Aorta (tissue), 5 donors: ENCODE measurements at regions of chr5 and their contacts with region 1.

Region 1: DNA sequence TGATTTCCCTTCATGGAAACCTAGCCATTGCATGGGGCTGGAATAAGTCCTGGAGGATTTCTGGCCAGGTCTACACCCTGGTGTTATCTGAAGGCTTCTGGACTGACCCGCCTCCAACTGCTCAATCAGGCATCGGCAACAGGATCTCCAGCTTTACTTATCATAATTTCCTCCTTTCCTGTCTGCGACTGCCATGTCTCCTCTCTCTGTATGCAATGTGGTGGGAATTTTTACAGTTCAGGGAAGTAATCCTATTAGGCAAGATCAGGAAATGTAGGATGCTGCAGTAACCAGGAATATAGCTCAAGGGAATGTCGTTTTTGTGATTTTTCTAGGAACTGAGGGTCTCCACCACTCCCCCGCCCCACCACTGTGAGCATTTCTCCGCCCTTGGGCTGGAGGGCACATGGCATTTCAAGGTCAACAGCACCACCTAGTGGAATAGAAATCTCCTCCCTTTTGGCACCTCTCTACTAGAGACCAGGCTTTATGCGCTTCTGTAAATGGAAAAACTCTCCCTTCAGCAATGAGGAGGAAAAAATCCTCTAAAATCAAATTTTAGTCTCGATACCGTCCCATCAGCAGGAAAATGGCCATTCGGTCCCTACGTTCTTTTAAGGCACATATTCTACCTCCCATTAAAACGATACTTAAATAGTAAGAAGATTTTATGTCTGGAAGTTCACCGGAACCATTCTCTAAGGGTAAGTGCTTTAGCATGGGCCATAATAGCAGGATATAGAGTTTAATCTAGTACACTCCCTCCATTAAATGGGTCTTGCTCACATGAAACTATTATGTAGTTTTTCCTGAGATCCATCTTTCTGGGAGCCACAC is 93.0 kb downstream of the YTHDC2 start:
- DNase-seq: peak in 1 of 2 donors; percentile 49
- ATAC-seq: peak; percentile 87
- H3K4me3 ChIP-seq: no peak overlapping the region
- H3K27ac ChIP-seq: no peak overlapping the region
- H3K4me1 ChIP-seq: no peaks in the 10 kb centered on the region
- H3K27me3 ChIP-seq: no peaks in the 10 kb centered on the region

Region 2: GRCh38 chr5:112995764-112996618 is 610.5 kb before region 1 on chr5:
- intact Hi-C with region 1: loop called (anchors 5 to 10 kb)
- DNase-seq: peak; percentile 76 to 82
- ATAC-seq: peak; percentile 87
- H3K4me3 ChIP-seq: no peak overlapping the region
- H3K27ac ChIP-seq: no peak overlapping the region
- H3K4me1 ChIP-seq: no peaks in the 10 kb centered on the region
- H3K27me3 ChIP-seq: no peaks in the 10 kb centered on the region

Region 3: DNA sequence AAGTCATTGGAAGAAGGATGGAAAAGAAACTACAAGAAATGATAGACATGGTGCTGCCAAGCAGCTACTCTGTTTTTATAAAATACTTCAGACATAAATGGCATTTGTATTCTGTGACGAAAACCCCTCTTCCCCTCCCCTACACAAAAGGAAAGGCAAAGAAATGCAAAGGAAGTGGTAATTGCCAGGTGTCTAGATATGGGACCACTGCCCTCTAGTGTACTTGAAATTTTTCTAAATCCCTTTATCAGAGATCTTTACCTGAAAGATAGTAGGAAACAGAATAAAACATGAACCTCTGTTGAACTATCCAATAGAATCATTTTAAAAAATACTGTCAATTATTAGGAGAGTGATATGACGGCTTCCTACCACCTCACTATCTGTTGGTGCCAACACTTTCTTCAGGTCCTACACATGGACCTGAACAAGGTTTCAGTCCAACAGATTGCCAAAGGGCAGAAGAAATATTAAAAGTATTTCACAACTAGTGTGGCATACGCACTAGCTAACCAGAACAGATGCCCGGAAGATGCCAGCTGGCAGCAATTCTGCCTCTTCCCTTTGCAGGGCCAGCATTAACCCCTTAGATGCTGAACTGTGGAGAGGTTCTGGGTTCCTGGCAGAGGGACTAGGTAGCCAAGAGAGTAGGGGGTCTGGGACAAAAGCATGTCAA is 275.8 kb before region 1 on chr5:
- intact Hi-C with region 1: loop called in 1 of 2 experiments (anchors 10 kb)
- DNase-seq: peak in 1 of 2 donors; percentile 68
- ATAC-seq: peak; percentile 57
- H3K4me3 ChIP-seq: no peak overlapping the region
- H3K27ac ChIP-seq: no peak overlapping the region
- H3K4me1 ChIP-seq: no peaks in the 10 kb centered on the region
- H3K27me3 ChIP-seq: no peaks in the 10 kb centered on the region

Region 4: DNA sequence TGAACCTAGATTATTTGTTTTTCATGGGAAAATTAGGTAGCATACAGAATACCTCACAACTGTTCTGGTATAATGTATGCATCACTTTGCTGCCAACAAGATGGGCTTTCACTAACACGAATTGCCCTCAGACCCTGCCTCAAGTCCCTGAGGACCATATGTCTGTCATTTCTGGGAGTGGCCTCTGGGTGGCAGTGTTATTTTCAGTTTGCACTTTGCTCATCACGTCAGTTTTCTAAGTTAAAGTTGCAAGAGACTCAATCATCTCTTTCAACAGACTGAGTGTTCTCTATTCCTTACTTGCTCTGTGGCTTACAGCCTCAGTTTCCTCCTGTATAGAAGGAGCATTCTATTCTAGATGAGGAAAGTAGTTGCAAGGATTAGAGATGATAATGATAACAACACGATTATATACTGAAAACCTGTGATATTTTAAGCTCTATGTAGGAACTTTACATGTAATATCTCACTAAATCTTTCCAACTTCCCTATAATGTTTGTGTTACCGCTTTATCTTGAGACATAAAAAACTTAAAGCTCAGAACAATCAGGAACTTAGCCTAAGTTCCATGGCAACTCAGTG is 227.5 kb before region 1 on chr5:
- intact Hi-C with region 1: loop called (anchors 2 to 10 kb)
- DNase-seq: peak in 1 of 2 donors; percentile 58
- ATAC-seq: no peak
- H3K4me3 ChIP-seq: no peak overlapping the region
- H3K27ac ChIP-seq: no peak overlapping the region
- H3K4me1 ChIP-seq: peaks cover 0 to 1% of the 10 kb centered on the region in 2 donors
- H3K27me3 ChIP-seq: no peaks in the 10 kb centered on the region

Region 5: DNA sequence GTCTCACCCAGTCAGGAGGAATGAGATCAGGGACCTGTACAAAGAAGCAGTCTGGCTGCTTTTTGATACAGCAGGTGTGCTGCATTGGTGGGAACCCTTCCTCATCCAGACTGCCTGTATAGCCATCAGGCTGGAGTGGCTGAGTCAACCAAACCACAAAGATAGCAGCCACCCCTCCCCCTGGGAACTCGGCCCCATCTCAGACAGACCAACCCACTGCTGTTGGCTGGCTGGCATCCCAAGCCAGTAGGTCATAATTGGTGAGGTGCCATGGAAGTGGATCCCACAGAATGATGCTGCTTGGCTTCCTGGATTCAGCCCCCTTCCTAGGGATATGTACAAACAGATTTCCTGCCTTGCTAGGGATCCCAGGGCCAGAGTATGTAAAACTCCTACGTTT is 32.1 kb before region 1 on chr5:
- intact Hi-C with region 1: no loop called
- DNase-seq: no peak
- ATAC-seq: no peak
- H3K4me3 ChIP-seq: no peak overlapping the region
- H3K27ac ChIP-seq: no peak overlapping the region
- H3K4me1 ChIP-seq: no peaks in the 10 kb centered on the region
- H3K27me3 ChIP-seq: no peaks in the 10 kb centered on the region

Region 6: DNA sequence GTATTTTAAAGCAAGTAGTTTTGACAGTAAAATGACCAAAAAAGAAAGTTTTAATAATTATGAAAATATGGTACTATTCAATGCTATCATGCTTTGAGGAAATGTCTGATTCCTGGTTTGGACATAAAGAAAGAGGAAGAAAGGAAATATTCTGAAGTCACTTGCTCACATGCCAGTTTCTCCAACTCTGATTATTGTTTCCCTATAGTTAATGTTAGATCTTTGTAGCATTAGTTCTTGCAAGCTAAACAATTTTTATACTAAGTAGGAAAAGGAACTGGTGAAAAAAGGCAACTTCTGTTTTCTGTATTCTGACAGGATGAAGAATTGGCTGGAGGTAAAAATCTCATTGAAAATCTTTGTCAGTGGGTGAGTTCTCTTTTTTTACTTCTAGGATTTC is 26.5 kb after region 1 on chr5:
- intact Hi-C with region 1: no loop called
- DNase-seq: no peak
- ATAC-seq: no peak
- H3K4me3 ChIP-seq: no peak overlapping the region
- H3K27ac ChIP-seq: no peak overlapping the region
- H3K4me1 ChIP-seq: no peaks in the 10 kb centered on the region
- H3K27me3 ChIP-seq: no peaks in the 10 kb centered on the region